Pancreas (tissue), 10 donors: ENCODE measurements at regions of chr9 and their contacts with region 1.

Region 1: DNA sequence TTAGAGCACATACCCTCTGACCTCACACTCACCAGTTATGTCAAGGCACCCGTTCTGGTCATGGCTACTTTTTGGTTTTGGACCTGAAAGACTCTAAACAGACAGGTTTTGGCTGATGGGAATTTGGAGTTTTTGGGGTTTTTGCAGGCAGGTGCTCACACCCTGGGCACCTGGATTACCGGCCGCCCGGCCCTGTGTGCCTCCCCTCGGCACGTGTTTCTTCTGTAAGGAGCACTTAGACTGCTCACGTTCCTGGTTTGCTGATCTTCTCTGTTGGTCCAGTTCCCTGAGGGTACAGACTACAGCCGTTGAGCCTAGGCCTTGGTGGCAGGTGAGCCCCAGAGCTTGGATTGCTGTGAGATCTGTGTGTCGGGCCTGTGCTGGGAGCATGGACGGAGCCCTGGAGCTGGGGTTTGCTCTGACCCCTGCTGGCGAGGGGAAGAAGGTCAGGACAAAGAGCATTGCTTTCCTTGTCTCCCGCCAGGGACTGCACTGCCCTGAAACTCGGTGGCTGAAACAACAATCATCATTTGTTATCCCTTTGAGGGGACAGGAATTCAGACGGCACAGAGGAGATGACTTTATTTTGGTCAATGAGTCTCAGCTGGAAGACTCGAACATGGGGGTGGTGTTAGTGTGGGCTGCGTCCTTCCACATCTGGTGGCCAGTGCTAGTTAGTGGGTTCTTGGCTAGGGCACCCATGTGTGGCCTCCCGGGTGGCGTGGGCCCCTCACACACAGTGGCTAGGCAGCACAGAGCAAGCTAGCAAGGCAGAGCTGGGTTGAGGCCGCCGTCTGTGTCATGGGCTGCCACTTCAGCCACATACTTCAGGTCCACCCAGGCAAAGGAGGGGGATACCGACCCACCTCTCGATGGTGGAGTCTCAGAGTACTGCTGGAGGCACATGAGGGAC is 76.4 kb downstream of the EHMT1 start:
- DNase-seq: peak; percentile 55 to 85 (median 70)
- ATAC-seq: peak; percentile 86 to 98 (median 94)
- H3K4me3 ChIP-seq: no peak overlapping the region
- H3K27ac ChIP-seq: peak overlapping the region in 3 of 4 donors; percentile 34 to 50 (median 42)
- H3K4me1 ChIP-seq: peaks cover 0 to 5% (median 0%) of the 10 kb centered on the region in 3 donors
- H3K27me3 ChIP-seq: no peaks in the 10 kb centered on the region
- CTCF ChIP-seq: peak; percentile 57 to 78 (median 68)

Region 2: DNA sequence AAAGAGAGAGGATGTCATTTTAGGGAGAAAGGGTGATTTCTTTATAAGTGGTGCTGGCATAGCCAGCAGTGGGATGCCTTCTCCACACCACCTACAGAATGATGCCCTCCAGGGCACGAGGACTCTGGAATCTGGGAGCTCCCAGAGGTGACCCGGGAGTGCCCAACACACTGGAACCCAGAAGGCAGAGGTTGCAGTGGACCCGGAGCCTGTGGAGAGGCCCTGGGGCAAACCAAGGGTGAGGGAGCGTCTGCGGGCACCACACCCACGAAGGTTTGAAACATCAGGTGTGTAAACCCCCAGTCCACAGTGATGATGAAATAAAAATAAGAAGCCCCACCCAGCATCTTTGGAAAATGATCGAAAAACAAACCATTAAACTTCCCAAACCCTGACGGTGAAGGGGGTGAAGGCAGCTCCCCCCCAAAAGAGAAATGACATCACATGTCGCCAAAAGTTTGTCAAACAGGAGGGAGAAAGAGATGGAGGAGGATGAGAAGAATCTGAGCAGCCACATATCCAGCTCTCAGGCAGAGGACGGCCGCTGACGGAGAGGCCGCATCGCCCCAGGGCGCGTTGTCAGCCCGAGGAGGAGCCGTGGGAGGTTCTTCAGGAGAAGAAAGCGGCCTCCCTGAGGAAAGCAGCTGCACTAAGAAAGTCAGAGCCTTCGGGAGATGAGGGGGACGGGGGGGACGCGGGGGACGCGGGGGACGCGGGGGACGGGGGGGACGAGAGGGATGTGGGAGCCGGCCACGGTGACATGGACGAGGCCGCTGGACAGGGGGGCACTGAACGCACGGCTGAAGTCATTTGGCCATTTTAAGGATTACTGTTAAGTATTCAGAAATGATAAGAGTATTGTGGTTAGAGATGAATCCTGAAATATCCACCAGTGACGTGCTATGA is 193.0 kb before region 1 on chr9:
- intact Hi-C with region 1: no loop called
- DNase-seq: peak in 1 of 6 donors; percentile 51
- ATAC-seq: no peak
- H3K4me3 ChIP-seq: no peak overlapping the region
- H3K27ac ChIP-seq: no peak overlapping the region
- H3K4me1 ChIP-seq: no peaks in the 10 kb centered on the region
- H3K27me3 ChIP-seq: no peaks in the 10 kb centered on the region
- CTCF ChIP-seq: no peak

Region 3: GRCh38 chr9:137564817-137565411 is 130.3 kb before region 1 on chr9:
- intact Hi-C with region 1: loop called in 1 of 3 experiments (anchors 10 kb)
- DNase-seq: peak in 1 of 6 donors; percentile 3
- ATAC-seq: no peak
- H3K4me3 ChIP-seq: no peak overlapping the region
- H3K27ac ChIP-seq: no peak overlapping the region
- H3K4me1 ChIP-seq: no peaks in the 10 kb centered on the region
- H3K27me3 ChIP-seq: no peaks in the 10 kb centered on the region
- CTCF ChIP-seq: no peak